Gastrocnemius medialis (tissue), 4 donors: ENCODE measurements at regions of chr11 and their contacts with region 1.

Region 1: DNA sequence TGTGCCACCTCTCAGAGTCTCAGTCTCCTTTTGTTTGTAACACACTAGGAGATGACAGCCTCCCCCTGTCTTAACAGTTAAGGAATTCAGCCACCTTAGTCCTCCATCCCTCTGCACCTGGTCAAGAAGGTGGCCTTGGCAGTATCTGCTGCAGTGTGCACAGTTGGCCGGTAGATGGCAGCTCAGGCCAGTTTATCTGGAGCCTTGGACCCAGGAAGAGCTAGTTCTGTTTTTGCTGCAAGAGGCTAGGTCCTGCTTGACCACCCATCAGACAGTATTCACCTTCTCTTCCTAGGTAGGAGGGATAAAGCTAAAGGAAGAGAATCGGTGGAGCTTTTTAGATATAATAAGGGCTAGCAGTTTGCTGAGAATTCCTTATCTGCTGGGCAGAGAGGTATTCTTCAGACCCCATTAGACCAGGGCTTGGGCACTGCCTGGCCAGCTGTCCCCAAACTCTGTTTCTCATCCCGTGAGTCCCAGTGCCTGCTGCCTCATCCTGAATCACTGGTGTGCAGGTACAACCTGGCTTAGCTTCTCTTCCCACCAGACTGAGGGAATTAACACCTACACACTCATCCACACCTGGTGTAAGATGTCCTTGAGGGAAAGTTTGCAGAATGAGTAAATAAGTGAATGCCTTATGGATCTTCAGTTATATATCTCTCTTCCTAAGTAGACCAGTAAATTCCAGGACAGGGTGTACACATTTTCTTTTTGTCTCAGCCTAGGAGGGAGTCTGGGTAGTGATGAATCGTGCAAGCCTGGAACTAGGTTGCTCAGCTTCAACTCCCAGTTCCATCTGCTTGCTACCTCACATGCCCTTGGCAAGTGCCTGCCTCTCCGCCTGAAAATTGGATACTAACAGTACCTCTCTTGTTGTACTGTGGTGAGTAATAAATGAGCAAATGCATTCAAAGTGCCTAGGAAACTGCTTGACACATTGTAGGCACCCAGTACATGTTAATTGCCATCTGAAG is 70.8 kb upstream of the NARS2 start:
- DNase-seq: peak; percentile 16 to 28
- ATAC-seq: no peak
- H3K4me3 ChIP-seq: no peak overlapping the region
- H3K27ac ChIP-seq: no peak overlapping the region
- H3K4me1 ChIP-seq: no peaks in the 10 kb centered on the region
- H3K27me3 ChIP-seq: no peaks in the 10 kb centered on the region
- CTCF ChIP-seq: peak; percentile 74 to 90 (median 83)
- POLR2A ChIP-seq: no peak

Region 2: DNA sequence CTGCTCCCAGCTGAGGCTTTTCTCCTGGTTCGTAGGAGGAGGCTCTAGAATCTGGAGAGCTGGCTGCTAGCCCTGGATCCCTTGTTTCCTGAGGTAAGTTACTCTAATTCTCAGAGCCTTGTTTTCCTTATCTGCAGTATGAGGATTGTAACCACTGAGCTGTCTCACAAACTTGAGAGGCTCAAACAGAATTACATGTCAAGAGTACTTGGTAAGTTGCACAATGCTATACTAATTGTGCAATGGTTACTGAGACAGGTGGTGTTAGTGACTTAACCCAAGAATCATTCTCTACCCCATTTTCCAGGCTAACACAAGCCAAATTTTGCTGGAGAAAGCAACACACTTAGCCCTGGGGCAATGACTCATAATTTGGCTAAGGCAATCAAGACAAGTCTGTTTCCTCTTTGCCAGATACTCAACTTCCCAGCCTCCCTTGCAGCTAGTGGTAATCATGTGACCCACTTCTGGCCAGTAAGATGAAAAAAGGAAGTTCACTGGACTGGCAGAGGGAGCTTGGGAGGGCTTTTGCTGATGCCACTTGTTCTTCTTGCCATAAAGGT is 447.4 kb after region 1 on chr11:
- in situ Hi-C with region 1: loop called in 2 of 4 experiments (anchors 10 to 25 kb)
- intact Hi-C with region 1: no loop called
- DNase-seq: peak; percentile 56 to 66
- ATAC-seq: peak; percentile 91 to 94
- H3K4me3 ChIP-seq: no peak overlapping the region
- H3K27ac ChIP-seq: peak overlapping the region in 3 of 4 donors; percentile 55 to 68 (median 58)
- H3K4me1 ChIP-seq: peaks cover 13 to 19% of the 10 kb centered on the region in 2 donors
- H3K27me3 ChIP-seq: no peaks in the 10 kb centered on the region
- CTCF ChIP-seq: no peak
- POLR2A ChIP-seq: no peak

Region 3: GRCh38 chr11:79486242-79486984 is 840.9 kb after region 1 on chr11:
- in situ Hi-C with region 1: loop called in 1 of 4 experiments (anchors 25 kb)
- intact Hi-C with region 1: loop called (anchors 5 kb)
- DNase-seq: no peak
- ATAC-seq: no peak
- H3K4me3 ChIP-seq: no peak overlapping the region
- H3K27ac ChIP-seq: no peak overlapping the region
- H3K4me1 ChIP-seq: no peaks in the 10 kb centered on the region
- H3K27me3 ChIP-seq: no peaks in the 10 kb centered on the region
- CTCF ChIP-seq: no peak
- POLR2A ChIP-seq: no peak

Region 4: GRCh38 chr11:79493555-79494171 is 848.1 kb after region 1 on chr11:
- in situ Hi-C with region 1: loop called in 1 of 4 experiments (anchors 25 kb)
- intact Hi-C with region 1: loop called (anchors 5 kb)
- DNase-seq: peak; percentile 11 to 33
- ATAC-seq: peak in 1 of 2 donors; percentile 56
- H3K4me3 ChIP-seq: no peak overlapping the region
- H3K27ac ChIP-seq: no peak overlapping the region
- H3K4me1 ChIP-seq: no peaks in the 10 kb centered on the region
- H3K27me3 ChIP-seq: no peaks in the 10 kb centered on the region
- CTCF ChIP-seq: peak; percentile 45 to 81 (median 67)
- POLR2A ChIP-seq: no peak